ENCODE measurements at regions of chr20 and their contacts with region 1.

Region 1: GRCh38 chr20:38033310-38034107 is at the starts of genes RPRD1B and TTI1:
- DNase-seq: peak; percentile 93
- H3K4me3 Mint-ChIP-seq: peak within 1 kb of the TSS; percentile 98
- H3K27ac Mint-ChIP-seq: peak within 1 kb of the TSS; percentile 98
- H3K4me1 Mint-ChIP-seq: peaks cover 65% of the 10 kb centered on the region
- H3K27me3 Mint-ChIP-seq: no peaks in the 10 kb centered on the region
- total RNA-seq, gene RPRD1B: 31.6 to 32.7 TPM
- total RNA-seq, gene TTI1: 32.8 to 36.2 TPM

Region 2: DNA sequence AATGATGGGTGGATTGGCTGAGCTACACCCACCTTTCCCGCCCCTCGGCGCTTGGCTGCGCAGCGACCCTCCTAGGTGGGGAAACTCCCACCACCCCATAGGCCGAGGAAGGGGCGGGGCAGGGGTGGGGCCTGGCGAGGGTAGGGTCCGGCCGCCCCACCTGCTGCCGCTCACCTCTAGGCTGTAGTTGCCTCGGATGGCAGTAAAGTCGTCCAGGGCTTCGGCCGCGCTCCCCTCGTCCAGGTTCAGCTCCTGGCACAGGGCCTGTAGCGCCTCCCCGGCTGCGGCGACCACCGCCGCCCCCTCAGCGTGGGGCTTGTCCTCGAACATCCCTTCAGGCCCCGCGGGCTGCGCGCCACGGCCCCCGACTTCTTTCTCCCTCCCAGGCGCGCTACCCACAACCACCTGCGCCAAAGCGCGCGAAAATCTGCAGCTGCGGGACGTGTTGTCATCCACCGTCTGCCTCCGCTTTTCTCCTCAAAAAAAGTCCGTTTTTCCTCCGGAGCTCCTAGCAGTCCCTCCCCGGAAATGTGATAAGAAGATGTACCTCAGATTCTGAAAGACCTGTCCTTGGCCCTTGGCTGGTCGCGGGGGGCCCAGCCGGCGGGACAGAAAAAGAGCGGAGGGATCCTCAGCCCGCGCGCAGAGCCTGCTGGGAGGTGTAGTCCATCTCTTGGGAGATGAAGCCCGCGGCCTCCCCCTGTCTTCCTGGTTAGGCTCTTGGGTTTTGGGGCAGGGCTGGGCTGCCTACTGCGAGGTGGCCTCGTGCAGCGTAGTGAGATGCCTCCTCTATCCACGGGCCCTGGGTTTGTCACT is 937.7 kb before region 1 on chr20 and contains the start of gene RBL1:
- CTCF ChIA-PET with region 1: no interaction called
- intact Hi-C with region 1: loop called (anchors 10 kb)
- DNase-seq: peak; percentile 91
- H3K4me3 Mint-ChIP-seq: peak within 1 kb of the TSS; percentile 92
- H3K27ac Mint-ChIP-seq: peak within 1 kb of the TSS; percentile 100
- H3K4me1 Mint-ChIP-seq: peaks cover 37% of the 10 kb centered on the region
- H3K27me3 Mint-ChIP-seq: no peaks in the 10 kb centered on the region
- total RNA-seq, gene RBL1: 32.9 to 36.2 TPM

Region 3: GRCh38 chr20:37178839-37179670 is 854.5 kb before region 1 on chr20 and contains the starts of genes MROH8 and RPN2:
- CTCF ChIA-PET with region 1: no interaction called
- intact Hi-C with region 1: loop called (anchors 2 kb)
- DNase-seq: peak; percentile 98
- H3K4me3 Mint-ChIP-seq: peak within 1 kb of the TSS; percentile 94
- H3K27ac Mint-ChIP-seq: peak within 1 kb of the TSS; percentile 97
- H3K4me1 Mint-ChIP-seq: peaks cover 37% of the 10 kb centered on the region
- H3K27me3 Mint-ChIP-seq: no peaks in the 10 kb centered on the region
- total RNA-seq, gene MROH8: 0.54 to 0.91 TPM
- total RNA-seq, gene RPN2: 102 to 104 TPM

Region 4: GRCh38 chr20:37693635-37694626 is 339.6 kb before region 1 on chr20 and contains the start of gene CTNNBL1:
- CTCF ChIA-PET with region 1: no interaction called
- intact Hi-C with region 1: loop called (anchors 1 kb)
- DNase-seq: peak; percentile 98
- H3K4me3 Mint-ChIP-seq: peak within 1 kb of the TSS; percentile 98
- H3K27ac Mint-ChIP-seq: peak within 1 kb of the TSS; percentile 86
- H3K4me1 Mint-ChIP-seq: peaks cover 26% of the 10 kb centered on the region
- H3K27me3 Mint-ChIP-seq: peaks cover 13% of the 10 kb centered on the region
- total RNA-seq, gene CTNNBL1: 66.4 to 75.4 TPM

Region 5: DNA sequence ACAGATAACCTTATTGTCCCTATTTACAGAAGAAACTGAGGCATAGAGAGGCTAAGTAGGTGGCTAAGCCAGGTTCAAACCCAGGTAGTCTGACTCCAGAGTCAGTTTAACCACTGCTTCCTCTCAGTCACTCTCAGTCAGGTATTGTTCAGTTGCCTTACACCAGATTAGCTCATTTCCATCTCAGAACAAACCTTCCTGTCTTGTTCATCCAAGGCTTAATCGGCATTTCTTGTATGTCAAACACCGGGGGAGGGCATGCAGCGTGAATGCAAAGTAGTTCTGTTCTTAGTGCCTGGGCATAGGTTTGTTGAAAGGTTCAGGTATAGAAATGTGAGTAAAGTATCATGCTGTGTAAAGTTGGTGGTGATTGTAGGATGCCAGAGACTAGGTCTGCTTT is 288.0 kb before region 1 on chr20:
- CTCF ChIA-PET with region 1: no interaction called
- intact Hi-C with region 1: loop called (anchors 1 kb)
- DNase-seq: peak; percentile 79
- H3K4me3 Mint-ChIP-seq: peak overlapping the region; percentile 23
- H3K27ac Mint-ChIP-seq: peak overlapping the region; percentile 84
- H3K4me1 Mint-ChIP-seq: peaks cover 20% of the 10 kb centered on the region
- H3K27me3 Mint-ChIP-seq: no peaks in the 10 kb centered on the region

Region 6: DNA sequence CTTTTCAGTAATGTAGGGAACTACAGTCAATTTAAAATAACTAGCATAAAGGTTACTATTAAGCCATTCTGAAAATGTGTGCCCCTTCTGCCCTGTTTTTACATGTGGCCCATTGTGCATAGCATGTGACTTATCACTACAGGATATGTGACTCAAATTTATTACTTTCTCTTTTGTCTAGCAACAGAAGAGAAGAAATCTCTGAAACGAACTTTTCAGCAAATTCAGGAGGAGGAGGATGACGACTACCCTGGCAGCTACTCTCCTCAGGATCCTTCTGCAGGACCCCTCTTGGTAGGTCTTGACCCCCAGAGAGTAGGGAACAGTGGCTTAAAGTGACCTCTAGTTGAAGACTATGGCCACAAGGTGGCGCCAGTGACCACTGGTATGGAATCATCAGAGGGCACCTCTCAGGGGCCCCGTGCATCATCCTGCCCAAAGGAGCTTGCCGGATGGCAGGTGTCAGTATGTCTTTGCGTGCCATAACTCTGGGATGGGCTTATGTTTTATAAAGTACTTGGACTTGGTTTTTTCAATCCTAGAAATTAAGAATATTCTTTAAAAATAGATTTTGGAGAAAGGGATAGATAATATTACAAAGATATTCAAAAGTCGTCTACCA is 24.0 kb after region 1 on chr20:
- CTCF ChIA-PET with region 1: interaction called, 5 read pairs
- intact Hi-C with region 1: loop called (anchors 1 kb)
- DNase-seq: peak; percentile 82
- H3K4me3 Mint-ChIP-seq: no peak overlapping the region
- H3K27ac Mint-ChIP-seq: peak overlapping the region; percentile 73
- H3K4me1 Mint-ChIP-seq: peaks cover 40% of the 10 kb centered on the region
- H3K27me3 Mint-ChIP-seq: no peaks in the 10 kb centered on the region

Region 7: GRCh38 chr20:38304845-38305447 is 271.4 kb after region 1 on chr20:
- CTCF ChIA-PET with region 1: no interaction called
- intact Hi-C with region 1: no loop called
- DNase-seq: peak; percentile 35
- H3K4me3 Mint-ChIP-seq: no peak overlapping the region
- H3K27ac Mint-ChIP-seq: no peak overlapping the region
- H3K4me1 Mint-ChIP-seq: peaks cover 8% of the 10 kb centered on the region
- H3K27me3 Mint-ChIP-seq: peaks cover 52% of the 10 kb centered on the region